ENCODE measurements at regions of chr2 and their contacts with region 1.

Region 1: DNA sequence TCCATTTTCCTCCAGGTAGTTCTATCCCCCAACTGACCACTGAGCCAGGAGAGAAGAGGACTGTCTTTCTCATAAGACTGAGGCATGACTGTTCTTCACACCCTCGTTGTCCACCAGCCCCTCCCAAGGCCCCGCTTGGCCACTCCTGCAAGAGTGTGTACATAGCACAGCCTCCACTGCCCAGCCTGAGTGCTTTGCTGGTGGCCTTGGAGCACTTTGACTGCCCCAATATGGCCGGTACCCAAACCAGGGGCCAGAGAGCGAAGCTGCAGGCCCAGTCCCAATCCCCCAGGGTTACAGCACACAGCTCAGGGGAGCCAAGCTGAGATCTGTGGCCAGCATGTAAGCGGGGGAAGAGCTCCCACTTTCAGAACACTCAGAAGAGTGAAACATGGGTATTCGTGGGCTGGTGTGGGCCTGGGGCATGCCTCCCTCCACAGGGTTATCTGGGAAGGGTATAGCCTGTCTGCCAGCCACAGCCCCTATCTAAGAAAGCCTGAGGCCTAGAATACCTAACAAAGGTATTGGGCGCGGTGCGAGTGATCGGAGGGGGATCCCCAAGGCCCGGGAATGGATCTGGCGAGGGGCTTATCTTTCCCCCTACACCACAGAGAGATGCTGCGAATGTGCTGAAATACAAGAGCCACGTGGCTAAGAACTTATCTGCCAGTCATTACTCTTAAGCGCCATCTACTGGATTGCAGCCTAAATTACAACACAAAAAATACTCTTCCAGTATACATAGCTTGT is 163.8 kb downstream of the WDPCP start:
- DNase-seq: peak; percentile 33
- H3K4me3 ChIP-seq: no peak overlapping the region
- H3K27ac ChIP-seq: no peak overlapping the region
- H3K4me1 ChIP-seq: no peaks in the 10 kb centered on the region
- H3K27me3 ChIP-seq: no peaks in the 10 kb centered on the region
- CTCF ChIP-seq: peak; percentile 55 to 56
- POLR2A ChIP-seq: no peak

Region 2: DNA sequence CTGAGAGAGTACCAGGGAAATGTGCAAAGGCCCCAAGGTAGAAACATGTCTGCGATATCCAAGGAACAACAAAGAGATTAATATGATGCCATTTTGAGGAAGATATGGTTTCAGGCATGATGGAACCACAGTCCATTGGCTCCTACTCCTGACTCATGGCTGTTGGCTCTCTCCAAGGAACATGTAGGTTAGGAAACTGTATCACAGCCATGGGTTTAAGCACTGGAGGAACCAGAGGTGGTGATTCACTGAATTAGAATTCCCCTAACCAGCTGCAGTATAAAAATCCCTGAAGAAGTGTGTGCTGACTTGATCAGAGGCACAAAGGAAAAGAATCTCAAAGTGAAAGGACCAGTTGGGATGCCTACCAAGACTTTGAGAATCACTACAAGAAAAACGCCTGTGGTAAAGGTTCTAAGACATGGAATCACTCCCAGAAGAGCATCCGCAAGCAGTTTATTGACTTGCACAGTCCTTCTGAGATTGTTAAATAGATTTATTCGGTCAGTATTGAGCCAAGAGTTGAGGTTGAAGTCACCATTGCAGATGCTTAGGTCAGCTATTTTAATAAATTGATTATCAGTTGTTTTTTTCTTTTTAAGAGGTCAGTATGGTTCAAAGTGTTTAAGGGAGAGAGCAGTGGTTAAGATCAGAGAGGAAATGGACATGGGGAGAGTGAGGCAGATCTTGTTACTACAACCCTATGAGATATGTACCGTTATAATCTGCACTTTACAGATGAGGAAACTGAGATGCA is 484.6 kb before region 1 on chr2:
- CTCF ChIA-PET with region 1: interaction called, 4 read pairs
- POLR2A ChIA-PET with region 1: no interaction called
- dilution Hi-C with region 1: no loop called
- intact Hi-C with region 1: loop called (anchors 10 kb)
- DNase-seq: no peak
- H3K4me3 ChIP-seq: no peak overlapping the region
- H3K27ac ChIP-seq: no peak overlapping the region
- H3K4me1 ChIP-seq: no peaks in the 10 kb centered on the region
- H3K27me3 ChIP-seq: no peaks in the 10 kb centered on the region
- CTCF ChIP-seq: no peak
- POLR2A ChIP-seq: no peak

Region 3: GRCh38 chr2:63058921-63059792 is 365.3 kb before region 1 on chr2:
- CTCF ChIA-PET with region 1: no interaction called
- POLR2A ChIA-PET with region 1: no interaction called
- dilution Hi-C with region 1: no loop called
- intact Hi-C with region 1: loop called (anchors 10 kb)
- DNase-seq: no peak
- H3K4me3 ChIP-seq: no peak overlapping the region
- H3K27ac ChIP-seq: no peak overlapping the region
- H3K4me1 ChIP-seq: peaks cover 28% of the 10 kb centered on the region
- H3K27me3 ChIP-seq: peaks cover 72 to 98% of the 10 kb centered on the region in 2 experiments
- CTCF ChIP-seq: no peak
- POLR2A ChIP-seq: no peak

Region 4: GRCh38 chr2:63364866-63365265 is 59.6 kb before region 1 on chr2:
- CTCF ChIA-PET with region 1: no interaction called
- POLR2A ChIA-PET with region 1: interaction called, 10 read pairs
- dilution Hi-C with region 1: no loop called
- intact Hi-C with region 1: no loop called
- DNase-seq: peak; percentile 3
- H3K4me3 ChIP-seq: no peak overlapping the region
- H3K27ac ChIP-seq: no peak overlapping the region
- H3K4me1 ChIP-seq: no peaks in the 10 kb centered on the region
- H3K27me3 ChIP-seq: no peaks in the 10 kb centered on the region
- CTCF ChIP-seq: no peak
- POLR2A ChIP-seq: no peak

Region 5: DNA sequence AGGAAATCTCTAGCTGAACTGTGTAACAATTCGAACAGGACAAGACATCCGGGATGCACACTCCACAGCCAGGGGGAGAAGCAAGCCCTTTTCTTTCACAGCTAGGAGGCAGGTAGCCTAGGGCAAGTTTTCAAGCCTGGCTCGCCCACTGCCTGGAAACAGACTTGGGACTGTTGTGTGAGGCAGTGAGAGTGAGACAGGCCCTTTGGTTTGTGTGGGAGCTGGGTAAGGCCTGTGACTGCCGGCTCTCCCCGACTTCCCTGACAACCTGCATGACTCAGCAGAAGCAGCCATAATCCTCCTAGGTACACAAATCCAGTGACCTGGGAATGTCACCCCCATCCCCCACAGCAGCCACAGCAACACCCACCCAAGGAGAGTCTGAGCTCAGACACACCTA is 16.0 kb before region 1 on chr2:
- CTCF ChIA-PET with region 1: interaction called, 15 read pairs
- POLR2A ChIA-PET with region 1: no interaction called
- dilution Hi-C with region 1: no loop called
- intact Hi-C with region 1: no loop called
- DNase-seq: no peak
- H3K4me3 ChIP-seq: no peak overlapping the region
- H3K27ac ChIP-seq: no peak overlapping the region
- H3K4me1 ChIP-seq: no peaks in the 10 kb centered on the region
- H3K27me3 ChIP-seq: no peaks in the 10 kb centered on the region
- CTCF ChIP-seq: no peak
- POLR2A ChIP-seq: no peak

Measured in endothelial cell of umbilical vein (primary cell).